MCF 10A (cell line): ENCODE measurements at regions of chr14 and their contacts with region 1.

Region 1: GRCh38 chr14:45664668-45665359 is 411.8 kb upstream of the MIS18BP1 start:
- DNase-seq: peak; percentile 9
- H3K4me3 Mint-ChIP-seq: no peak overlapping the region
- H3K27ac Mint-ChIP-seq: no peak overlapping the region
- H3K4me1 Mint-ChIP-seq: no peaks in the 10 kb centered on the region
- H3K27me3 Mint-ChIP-seq: no peaks in the 10 kb centered on the region
- CTCF ChIP-seq: no peak

Region 2: DNA sequence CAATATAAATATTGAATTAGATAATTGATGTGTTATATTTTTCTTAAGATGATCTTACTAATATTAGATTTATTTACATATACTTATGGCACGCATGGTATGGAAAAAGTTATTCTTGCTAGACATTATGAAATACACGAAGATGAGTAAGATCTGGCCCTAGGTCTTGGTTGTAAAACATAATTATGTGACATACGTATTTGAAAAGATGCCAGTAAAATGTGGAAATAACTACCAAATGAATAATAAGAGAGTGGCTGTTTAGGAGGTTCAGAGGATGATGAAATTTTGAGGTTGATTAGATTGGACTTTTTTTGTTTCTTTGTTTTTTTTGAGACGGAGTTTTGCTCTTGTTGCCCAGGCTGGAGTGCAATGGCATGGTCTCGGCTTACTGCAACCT is 487.7 kb before region 1 on chr14:
- CTCF ChIA-PET with region 1: no interaction called
- POLR2A ChIA-PET with region 1: no interaction called
- intact Hi-C with region 1: no loop called
- DNase-seq: peak; percentile 93
- H3K4me3 Mint-ChIP-seq: peak overlapping the region; percentile 32
- H3K27ac Mint-ChIP-seq: no peak overlapping the region
- H3K4me1 Mint-ChIP-seq: peaks cover 10% of the 10 kb centered on the region
- H3K27me3 Mint-ChIP-seq: no peaks in the 10 kb centered on the region
- CTCF ChIP-seq: no peak

Region 3: GRCh38 chr14:45559618-45560017 is 105.2 kb before region 1 on chr14:
- CTCF ChIA-PET with region 1: no interaction called
- POLR2A ChIA-PET with region 1: no interaction called
- intact Hi-C with region 1: no loop called
- DNase-seq: no peak
- H3K4me3 Mint-ChIP-seq: no peak overlapping the region
- H3K27ac Mint-ChIP-seq: no peak overlapping the region
- H3K4me1 Mint-ChIP-seq: no peaks in the 10 kb centered on the region
- H3K27me3 Mint-ChIP-seq: no peaks in the 10 kb centered on the region
- CTCF ChIP-seq: no peak

Region 4: GRCh38 chr14:45650754-45651153 is 14.1 kb before region 1 on chr14:
- CTCF ChIA-PET with region 1: interaction called, 10 read pairs
- POLR2A ChIA-PET with region 1: interaction called, 3 read pairs
- intact Hi-C with region 1: no loop called
- DNase-seq: no peak
- H3K4me3 Mint-ChIP-seq: no peak overlapping the region
- H3K27ac Mint-ChIP-seq: no peak overlapping the region
- H3K4me1 Mint-ChIP-seq: peaks cover 14% of the 10 kb centered on the region
- H3K27me3 Mint-ChIP-seq: no peaks in the 10 kb centered on the region
- CTCF ChIP-seq: no peak